ENCODE measurements at regions of chr9 and their contacts with region 1.

Region 1: DNA sequence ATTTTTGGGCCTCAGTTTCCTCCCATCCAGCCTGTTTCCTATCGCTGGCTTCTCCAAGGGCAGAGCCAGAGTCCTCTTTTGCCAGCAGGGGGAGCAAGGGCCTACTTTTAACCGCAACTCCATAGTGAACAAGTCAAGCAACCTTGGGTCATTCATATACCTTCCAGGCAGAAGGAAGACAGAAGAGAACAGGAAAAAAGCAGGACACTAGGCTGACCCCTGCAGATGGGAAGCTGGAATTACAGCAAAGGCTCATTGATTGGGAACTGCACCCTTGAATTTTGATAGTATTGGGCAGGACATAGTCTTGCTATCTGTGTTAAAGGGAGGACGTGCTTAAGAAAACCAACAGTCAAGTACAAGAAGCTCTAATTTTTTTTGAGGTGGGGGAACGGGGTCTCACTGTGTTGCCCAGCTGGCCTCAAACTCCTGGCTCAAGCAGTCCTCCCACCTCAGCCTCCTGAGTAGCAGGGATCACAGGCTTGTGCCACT is 30.1 kb downstream of the QRFP start:
- DNase-seq: peak; percentile 85 to 88
- H3K4me3 ChIP-seq: no peak overlapping the region
- H3K27ac ChIP-seq: no peak overlapping the region
- H3K4me1 ChIP-seq: no peaks in the 10 kb centered on the region
- H3K27me3 ChIP-seq: no peaks in the 10 kb centered on the region
- CTCF ChIP-seq: peak; percentile 67 to 99 (median 95)
- EP300 ChIP-seq: no peak
- POLR2A ChIP-seq: no peak
- RAD21 ChIP-seq: peak; percentile 62 to 70

Region 2: GRCh38 chr9:130578865-130579737 is 287.4 kb before region 1 on chr9 and contains the start of gene FUBP3:
- CTCF ChIA-PET with region 1: no interaction called
- POLR2A ChIA-PET with region 1: no interaction called
- DNase-seq: peak; percentile 54 to 93
- H3K4me3 ChIP-seq: peak within 1 kb of the TSS; percentile 61 to 90 (median 84)
- H3K27ac ChIP-seq: peak within 1 kb of the TSS; percentile 82; the same call in 1 of the 2 replicates
- H3K4me1 ChIP-seq: peaks cover 0 to 5% (median 2%) of the 10 kb centered on the region in 4 experiments; a peak in 2 of 7 replicates
- H3K27me3 ChIP-seq: no peaks in the 10 kb centered on the region
- CTCF ChIP-seq: no peak
- EP300 ChIP-seq: peak in 1 of 2 experiments; percentile 50; a peak in 1 of 3 replicates
- POLR2A ChIP-seq: peak in 1 of 2 experiments; percentile 79; a peak in 2 of 3 replicates
- RAD21 ChIP-seq: no peak
- total RNA-seq, gene FUBP3: 70.1 and 76.4 TPM in 2 replicates

Region 3: GRCh38 chr9:130718562-130718961 is 148.0 kb before region 1 on chr9:
- CTCF ChIA-PET with region 1: interaction called, 12 read pairs
- POLR2A ChIA-PET with region 1: interaction called, 7 read pairs
- DNase-seq: no peak
- H3K4me3 ChIP-seq: no peak overlapping the region
- H3K27ac ChIP-seq: no peak overlapping the region
- H3K4me1 ChIP-seq: peaks cover 2 to 9% (median 3%) of the 10 kb centered on the region in 4 experiments; a peak in 4 of 7 replicates
- H3K27me3 ChIP-seq: no peaks in the 10 kb centered on the region
- CTCF ChIP-seq: no peak
- EP300 ChIP-seq: no peak
- POLR2A ChIP-seq: no peak
- RAD21 ChIP-seq: no peak

Region 4: DNA sequence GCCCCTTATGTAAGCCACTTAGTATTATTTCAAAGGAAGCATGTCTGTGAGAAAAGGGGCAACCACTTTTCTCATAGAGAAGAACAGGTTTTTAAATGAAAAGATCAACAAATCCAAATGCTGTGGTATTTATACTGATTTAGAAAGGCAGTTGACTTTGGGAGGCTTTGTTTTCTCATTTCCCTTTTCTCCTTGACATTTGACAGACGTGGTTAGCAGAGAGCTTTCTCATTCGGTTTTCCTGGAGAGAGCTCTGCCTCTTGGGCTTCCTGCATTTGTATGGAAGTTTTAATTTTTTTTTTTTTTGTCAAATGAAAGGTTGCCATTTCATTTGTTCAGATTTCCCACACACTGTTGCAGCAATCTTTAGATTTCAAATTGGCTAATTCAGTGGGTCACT is 110.5 kb before region 1 on chr9:
- CTCF ChIA-PET with region 1: interaction called, 34 read pairs
- POLR2A ChIA-PET with region 1: interaction called, 5 read pairs
- DNase-seq: no peak
- H3K4me3 ChIP-seq: no peak overlapping the region
- H3K27ac ChIP-seq: no peak overlapping the region
- H3K4me1 ChIP-seq: peaks cover 2 to 14% (median 6%) of the 10 kb centered on the region in 4 experiments; a peak in 5 of 7 replicates
- H3K27me3 ChIP-seq: no peaks in the 10 kb centered on the region
- CTCF ChIP-seq: no peak
- EP300 ChIP-seq: no peak
- POLR2A ChIP-seq: no peak
- RAD21 ChIP-seq: no peak

Region 5: DNA sequence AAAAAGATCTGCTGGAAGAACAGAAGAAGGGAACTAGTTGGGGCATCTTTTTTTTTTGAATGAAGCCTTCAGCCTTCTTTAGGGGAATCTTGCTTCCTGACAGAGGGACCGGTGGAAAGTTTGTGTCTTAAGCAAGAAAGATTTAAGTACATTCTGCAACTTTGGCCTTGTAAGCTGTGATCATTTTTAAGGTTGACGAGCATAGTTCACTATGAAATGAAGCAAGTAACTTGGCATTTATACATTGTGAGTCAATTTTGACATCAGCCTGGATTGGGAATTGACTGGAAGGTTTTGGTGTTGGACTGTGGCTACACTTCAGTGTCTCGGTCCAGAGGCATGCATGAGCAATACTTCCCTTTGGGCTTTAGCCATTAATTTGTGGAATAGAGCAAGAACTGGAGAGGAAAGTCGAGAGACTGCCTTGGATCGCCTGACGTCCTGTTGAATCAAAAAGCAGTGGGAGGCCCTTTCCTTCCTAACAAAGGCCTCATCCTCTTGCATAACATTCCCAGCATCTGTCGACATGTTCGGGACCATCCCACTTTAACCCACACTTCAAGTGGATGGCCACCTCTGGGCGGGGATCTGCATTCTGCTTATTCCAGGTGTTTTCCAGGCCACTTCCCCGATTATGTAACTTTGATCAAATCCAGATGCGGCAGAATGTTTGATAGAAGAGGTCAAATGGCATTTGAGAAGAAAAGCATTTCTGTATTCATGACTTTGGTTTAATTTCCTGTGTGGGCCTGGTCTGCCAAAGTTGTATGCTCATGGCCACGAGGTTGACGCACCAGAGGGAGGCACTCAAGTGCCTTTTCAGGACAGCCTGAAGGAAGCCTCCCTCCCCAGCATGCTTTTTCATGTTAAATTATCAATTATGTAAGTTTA is 18.9 kb before region 1 on chr9:
- CTCF ChIA-PET with region 1: interaction called, 26 read pairs
- POLR2A ChIA-PET with region 1: interaction called, 4 read pairs
- DNase-seq: no peak
- H3K4me3 ChIP-seq: no peak overlapping the region; a peak in 2 of 8 replicates
- H3K27ac ChIP-seq: peak overlapping the region; percentile 62
- H3K4me1 ChIP-seq: peaks cover 4 to 24% (median 13%) of the 10 kb centered on the region in 4 experiments
- H3K27me3 ChIP-seq: no peaks in the 10 kb centered on the region
- CTCF ChIP-seq: peak; percentile 18 to 44 (median 30); a peak in 3 of 4 replicates
- EP300 ChIP-seq: no peak
- POLR2A ChIP-seq: no peak
- RAD21 ChIP-seq: 0 out of 4 replicates have a peak, but pooled peaks of 1 of the 2 experiments have one; percentile 12

Region 6: GRCh38 chr9:130884980-130885696 is 18.6 kb after region 1 on chr9:
- CTCF ChIA-PET with region 1: interaction called, 49 read pairs
- POLR2A ChIA-PET with region 1: interaction called, 6 read pairs
- DNase-seq: no peak
- H3K4me3 ChIP-seq: no peak overlapping the region
- H3K27ac ChIP-seq: no peak overlapping the region; the same call in 1 of the 2 replicates
- H3K4me1 ChIP-seq: no peaks in the 10 kb centered on the region
- H3K27me3 ChIP-seq: no peaks in the 10 kb centered on the region
- CTCF ChIP-seq: no peak
- EP300 ChIP-seq: no peak
- POLR2A ChIP-seq: no peak
- RAD21 ChIP-seq: no peak

Region 7: DNA sequence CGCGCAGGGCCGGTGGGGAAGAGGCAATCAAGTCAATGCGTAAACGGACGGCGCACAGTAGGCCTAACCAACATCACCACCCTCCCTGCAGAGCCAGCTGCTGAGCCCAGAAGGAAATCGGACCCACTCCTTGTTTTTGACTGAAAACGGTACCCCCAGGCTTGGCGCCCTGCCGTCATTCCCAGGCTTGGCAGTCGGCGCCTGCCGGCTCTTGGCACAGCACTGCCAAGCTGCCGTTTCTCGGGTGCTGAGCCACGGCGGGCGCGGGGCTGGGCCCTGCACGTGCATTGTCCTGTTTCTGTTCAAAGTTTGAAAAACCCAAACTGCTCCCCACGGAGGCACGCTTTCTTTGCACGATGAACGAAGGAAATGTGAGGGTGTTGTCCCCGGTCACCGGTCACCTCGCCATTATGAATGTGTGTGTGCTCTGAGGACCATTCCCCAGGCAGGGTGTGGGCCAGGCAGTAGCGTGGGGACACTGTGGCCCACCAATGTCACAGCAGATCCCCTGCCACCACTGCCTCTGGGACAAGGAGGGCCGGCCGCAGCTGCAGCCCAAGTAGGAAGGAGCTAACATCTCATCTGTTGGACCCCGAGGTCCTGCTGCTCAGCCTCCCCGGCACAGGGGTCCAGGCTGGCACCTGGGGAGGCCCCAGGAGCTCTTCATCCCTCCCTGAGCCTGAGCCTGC is 52.5 kb after region 1 on chr9:
- CTCF ChIA-PET with region 1: interaction called, 15 read pairs
- POLR2A ChIA-PET with region 1: no interaction called
- DNase-seq: no peak
- H3K4me3 ChIP-seq: no peak overlapping the region
- H3K27ac ChIP-seq: no peak overlapping the region
- H3K4me1 ChIP-seq: peaks cover 1 to 20% (median 3%) of the 10 kb centered on the region in 4 experiments
- H3K27me3 ChIP-seq: no peaks in the 10 kb centered on the region; a peak in 1 of 7 replicates
- CTCF ChIP-seq: no peak
- EP300 ChIP-seq: no peak
- POLR2A ChIP-seq: no peak
- RAD21 ChIP-seq: no peak

Region 8: GRCh38 chr9:130946778-130947617 is 80.5 kb after region 1 on chr9:
- CTCF ChIA-PET with region 1: interaction called, 16 read pairs
- POLR2A ChIA-PET with region 1: no interaction called
- DNase-seq: no peak
- H3K4me3 ChIP-seq: no peak overlapping the region
- H3K27ac ChIP-seq: no peak overlapping the region
- H3K4me1 ChIP-seq: no peaks in the 10 kb centered on the region; a peak in 1 of 7 replicates
- H3K27me3 ChIP-seq: peaks cover 0 to under 1% (median 0%) of the 10 kb centered on the region in 4 experiments; a peak in 2 of 7 replicates
- CTCF ChIP-seq: no peak
- EP300 ChIP-seq: no peak
- POLR2A ChIP-seq: no peak
- RAD21 ChIP-seq: no peak

Region 9: DNA sequence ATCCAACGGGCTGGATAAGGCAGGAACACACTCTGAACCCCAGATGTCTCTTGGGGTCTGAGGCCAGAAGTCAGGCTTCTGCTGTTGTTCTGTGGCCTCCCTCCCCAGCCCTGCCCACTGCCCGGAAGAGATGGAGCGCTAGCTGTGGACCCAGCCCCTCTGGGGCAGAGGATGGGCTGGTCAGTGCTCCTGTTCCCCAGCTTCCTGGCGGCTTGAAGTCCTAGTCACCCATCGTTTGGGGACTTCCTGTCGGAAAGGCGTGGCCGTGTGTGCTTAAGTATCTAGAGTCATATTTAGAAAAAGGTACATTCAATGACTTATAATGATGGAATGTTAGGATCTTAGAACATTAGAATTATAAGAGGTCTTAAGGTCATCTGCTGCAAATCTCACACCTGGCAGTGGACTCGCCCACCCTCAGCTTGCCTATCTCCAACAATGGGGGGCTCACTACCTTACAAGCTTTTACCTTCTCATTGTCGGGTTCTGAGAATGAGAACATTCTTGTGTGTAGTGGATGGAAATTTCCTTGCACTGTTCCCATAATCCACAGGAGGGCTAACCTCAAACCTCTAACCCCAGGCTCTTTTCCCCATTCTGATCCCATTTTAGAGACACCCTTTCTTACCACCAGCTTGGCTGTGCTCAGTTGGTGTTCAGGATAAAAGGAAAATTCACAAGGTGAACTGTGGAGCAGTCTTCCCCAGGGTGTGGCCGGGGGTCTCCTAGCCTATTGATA is 216.4 kb after region 1 on chr9:
- CTCF ChIA-PET with region 1: no interaction called
- POLR2A ChIA-PET with region 1: no interaction called
- DNase-seq: no peak
- H3K4me3 ChIP-seq: no peak overlapping the region
- H3K27ac ChIP-seq: no peak overlapping the region
- H3K4me1 ChIP-seq: no peaks in the 10 kb centered on the region; a peak in 1 of 7 replicates
- H3K27me3 ChIP-seq: no peaks in the 10 kb centered on the region; a peak in 1 of 7 replicates
- CTCF ChIP-seq: no peak
- EP300 ChIP-seq: no peak
- POLR2A ChIP-seq: no peak
- RAD21 ChIP-seq: no peak

Region 10: GRCh38 chr9:131111854-131112311 is 245.4 kb after region 1 on chr9:
- CTCF ChIA-PET with region 1: no interaction called
- POLR2A ChIA-PET with region 1: no interaction called
- DNase-seq: no peak
- H3K4me3 ChIP-seq: no peak overlapping the region
- H3K27ac ChIP-seq: peak overlapping the region; percentile 82
- H3K4me1 ChIP-seq: peaks cover 3 to 16% (median 11%) of the 10 kb centered on the region in 4 experiments
- H3K27me3 ChIP-seq: no peaks in the 10 kb centered on the region
- CTCF ChIP-seq: peak in 2 of 3 experiments; percentile 14 to 39; a peak in 2 of 4 replicates
- EP300 ChIP-seq: no peak
- POLR2A ChIP-seq: no peak
- RAD21 ChIP-seq: peak; percentile 7 to 28; a peak in 1 of 4 replicates

Region 11: GRCh38 chr9:131423171-131423581 is 556.7 kb after region 1 on chr9:
- CTCF ChIA-PET with region 1: no interaction called
- POLR2A ChIA-PET with region 1: no interaction called
- DNase-seq: peak in 1 of 2 experiments; percentile 53
- H3K4me3 ChIP-seq: peak overlapping the region in 1 of 4 experiments; percentile 19; a peak in 1 of 8 replicates
- H3K27ac ChIP-seq: no peak overlapping the region
- H3K4me1 ChIP-seq: peaks cover 21 to 39% (median 35%) of the 10 kb centered on the region in 4 experiments
- H3K27me3 ChIP-seq: no peaks in the 10 kb centered on the region
- CTCF ChIP-seq: no peak
- EP300 ChIP-seq: no peak
- POLR2A ChIP-seq: peak in 1 of 2 experiments; percentile 59; a peak in 1 of 3 replicates
- RAD21 ChIP-seq: no peak